A673 (cell line): ENCODE measurements at regions of chr11 and their contacts with region 1.

Region 1: GRCh38 chr11:73592640-73593039 is 5.3 kb downstream of the FAM168A start:
- DNase-seq: no peak
- H3K4me3 ChIP-seq: no peak overlapping the region
- H3K27ac ChIP-seq: no peak overlapping the region
- H3K4me1 ChIP-seq: peaks cover 31% of the 10 kb centered on the region
- H3K27me3 ChIP-seq: no peaks in the 10 kb centered on the region
- CTCF ChIP-seq: no peak

Region 2: DNA sequence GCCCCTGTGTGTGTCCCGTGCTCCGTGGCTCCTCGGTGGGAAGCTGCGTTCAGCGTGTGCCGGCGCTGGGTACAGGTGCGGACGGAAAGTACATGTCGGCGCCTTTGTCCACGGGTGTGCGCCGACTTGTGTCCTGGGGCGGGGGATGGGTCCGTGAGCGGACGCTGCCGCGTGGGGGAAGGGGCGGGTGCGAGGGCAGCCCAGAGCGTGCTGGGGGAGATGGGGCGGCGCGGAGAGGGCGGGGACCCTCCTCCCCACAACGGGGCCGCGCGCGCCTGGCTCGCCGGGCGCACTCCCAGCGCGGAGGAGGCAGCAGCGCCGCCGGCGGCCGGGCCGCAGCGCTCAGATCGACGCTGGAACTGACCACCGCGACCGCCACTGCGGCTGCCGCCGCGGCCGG is 250.0 kb before region 1 on chr11:
- CTCF ChIA-PET with region 1: no interaction called
- POLR2A ChIA-PET with region 1: no interaction called
- intact Hi-C with region 1: no loop called
- DNase-seq: no peak
- H3K4me3 ChIP-seq: peak overlapping the region; percentile 12
- H3K27ac ChIP-seq: no peak overlapping the region
- H3K4me1 ChIP-seq: no peaks in the 10 kb centered on the region
- H3K27me3 ChIP-seq: no peaks in the 10 kb centered on the region
- CTCF ChIP-seq: no peak

Region 3: GRCh38 chr11:73647459-73648100 is 54.9 kb after region 1 on chr11:
- CTCF ChIA-PET with region 1: no interaction called
- POLR2A ChIA-PET with region 1: interaction called, 10 read pairs
- intact Hi-C with region 1: no loop called
- DNase-seq: peak; percentile 92
- H3K4me3 ChIP-seq: no peak overlapping the region
- H3K27ac ChIP-seq: no peak overlapping the region
- H3K4me1 ChIP-seq: no peaks in the 10 kb centered on the region
- H3K27me3 ChIP-seq: no peaks in the 10 kb centered on the region
- CTCF ChIP-seq: no peak

Region 4: DNA sequence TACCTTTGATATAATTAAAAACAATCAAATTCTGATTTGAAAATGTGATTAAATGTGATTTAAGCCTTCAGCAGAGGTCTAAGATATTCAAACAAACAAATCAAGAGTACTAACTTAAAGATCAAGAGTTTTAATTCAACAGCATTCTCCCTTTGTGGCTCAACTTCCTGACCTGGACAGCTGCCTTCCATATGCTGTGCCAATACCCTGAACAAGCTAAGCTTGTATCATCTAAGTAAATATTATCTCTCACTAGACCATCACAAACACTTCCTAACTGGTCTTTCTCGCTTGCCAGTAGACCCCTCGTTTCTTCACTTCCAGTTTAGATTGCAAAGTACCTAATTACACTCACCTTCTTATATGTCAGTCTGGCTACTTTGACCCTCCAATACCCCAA is 754.7 kb after region 1 on chr11:
- CTCF ChIA-PET with region 1: no interaction called
- POLR2A ChIA-PET with region 1: no interaction called
- intact Hi-C with region 1: no loop called
- DNase-seq: no peak
- H3K4me3 ChIP-seq: no peak overlapping the region
- H3K27ac ChIP-seq: no peak overlapping the region
- H3K4me1 ChIP-seq: no peaks in the 10 kb centered on the region
- H3K27me3 ChIP-seq: no peaks in the 10 kb centered on the region
- CTCF ChIP-seq: no peak